ENCODE measurements at regions of chr12 and their contacts with region 1.

Region 1: DNA sequence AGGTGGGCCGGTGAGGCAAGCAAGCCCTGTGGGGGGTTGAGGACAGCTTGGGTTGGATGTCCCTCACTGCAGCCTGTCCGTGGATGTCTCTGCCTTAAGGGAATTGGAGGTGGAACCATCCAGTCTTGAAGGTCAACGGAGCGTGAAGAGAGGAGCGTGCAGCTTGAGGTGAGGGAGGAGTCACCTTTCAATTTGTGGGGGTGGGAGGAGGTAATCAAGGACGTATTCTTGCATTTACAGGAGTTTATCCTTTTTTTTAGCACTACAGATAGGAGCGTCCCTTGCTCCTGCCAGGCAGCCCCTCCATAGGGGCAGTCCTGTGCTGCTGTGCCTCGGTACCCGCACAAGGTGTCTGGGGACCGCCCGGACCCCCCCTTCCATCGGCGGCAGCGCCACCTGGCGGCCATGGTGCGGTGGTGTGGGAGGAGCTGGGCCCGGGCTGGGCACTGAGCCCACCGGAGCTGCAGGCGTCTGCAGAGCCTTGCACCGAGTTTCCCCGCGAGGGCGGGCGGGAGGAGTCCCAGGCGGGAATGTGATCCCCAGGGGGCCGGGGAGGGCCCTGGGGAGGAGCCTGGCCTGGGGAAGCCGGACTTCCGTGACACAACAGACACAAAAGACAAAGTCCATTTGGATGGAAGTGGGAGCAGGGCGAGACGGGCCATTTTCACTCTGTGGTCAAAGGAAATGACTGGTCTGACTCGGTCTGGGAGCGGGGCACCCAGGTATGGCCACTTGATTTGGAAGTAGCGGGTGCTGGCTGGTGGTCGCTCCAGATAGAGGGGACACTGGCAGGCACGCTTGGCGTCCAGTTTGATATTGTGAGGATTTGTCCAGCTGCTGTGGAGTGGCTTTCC is 923 bp downstream of the DNAJC22 start:
- DNase-seq: peak; percentile 93
- ATAC-seq: peak; percentile 79
- H3K4me3 Mint-ChIP-seq: peak overlapping the region; percentile 75
- H3K27ac Mint-ChIP-seq: no peak overlapping the region
- H3K4me1 Mint-ChIP-seq: peaks cover 24% of the 10 kb centered on the region
- H3K27me3 Mint-ChIP-seq: peaks cover 87% of the 10 kb centered on the region
- CTCF ChIP-seq: peak; percentile 97

Region 2: GRCh38 chr12:49043856-49044258 is 303.8 kb before region 1 on chr12:
- CTCF ChIA-PET with region 1: no interaction called
- POLR2A ChIA-PET with region 1: no interaction called
- DNase-seq: peak; percentile 91
- ATAC-seq: peak; percentile 86
- H3K4me3 Mint-ChIP-seq: no peak overlapping the region
- H3K27ac Mint-ChIP-seq: no peak overlapping the region
- H3K4me1 Mint-ChIP-seq: no peaks in the 10 kb centered on the region
- H3K27me3 Mint-ChIP-seq: no peaks in the 10 kb centered on the region
- CTCF ChIP-seq: peak; percentile 76

Region 3: DNA sequence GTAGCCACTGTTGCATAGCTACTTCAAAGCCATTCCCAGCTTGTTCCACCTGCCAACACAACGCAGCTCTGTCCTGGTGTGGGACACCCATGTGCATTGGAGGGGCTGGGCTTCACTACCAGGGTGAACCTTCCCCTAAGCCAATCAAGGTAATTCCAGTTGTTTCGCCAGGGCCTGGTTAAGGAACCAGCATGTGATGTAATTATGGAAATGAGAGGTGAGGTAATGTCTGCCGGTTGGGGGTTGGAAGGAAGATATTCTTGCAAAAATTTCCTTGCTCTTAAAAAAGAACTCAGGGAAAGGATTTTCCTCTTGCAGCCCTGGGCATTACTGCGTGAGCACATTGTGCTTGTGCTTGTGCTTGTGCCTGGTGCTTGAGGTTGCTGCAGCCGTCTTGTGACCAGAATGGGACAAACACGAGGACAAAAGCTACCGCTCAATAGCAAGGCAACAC is 67.9 kb before region 1 on chr12:
- CTCF ChIA-PET with region 1: interaction called, 24 read pairs
- POLR2A ChIA-PET with region 1: no interaction called
- DNase-seq: no peak
- ATAC-seq: peak; percentile 53
- H3K4me3 Mint-ChIP-seq: no peak overlapping the region
- H3K27ac Mint-ChIP-seq: no peak overlapping the region
- H3K4me1 Mint-ChIP-seq: peaks cover 23% of the 10 kb centered on the region
- H3K27me3 Mint-ChIP-seq: no peaks in the 10 kb centered on the region
- CTCF ChIP-seq: no peak

Region 4: DNA sequence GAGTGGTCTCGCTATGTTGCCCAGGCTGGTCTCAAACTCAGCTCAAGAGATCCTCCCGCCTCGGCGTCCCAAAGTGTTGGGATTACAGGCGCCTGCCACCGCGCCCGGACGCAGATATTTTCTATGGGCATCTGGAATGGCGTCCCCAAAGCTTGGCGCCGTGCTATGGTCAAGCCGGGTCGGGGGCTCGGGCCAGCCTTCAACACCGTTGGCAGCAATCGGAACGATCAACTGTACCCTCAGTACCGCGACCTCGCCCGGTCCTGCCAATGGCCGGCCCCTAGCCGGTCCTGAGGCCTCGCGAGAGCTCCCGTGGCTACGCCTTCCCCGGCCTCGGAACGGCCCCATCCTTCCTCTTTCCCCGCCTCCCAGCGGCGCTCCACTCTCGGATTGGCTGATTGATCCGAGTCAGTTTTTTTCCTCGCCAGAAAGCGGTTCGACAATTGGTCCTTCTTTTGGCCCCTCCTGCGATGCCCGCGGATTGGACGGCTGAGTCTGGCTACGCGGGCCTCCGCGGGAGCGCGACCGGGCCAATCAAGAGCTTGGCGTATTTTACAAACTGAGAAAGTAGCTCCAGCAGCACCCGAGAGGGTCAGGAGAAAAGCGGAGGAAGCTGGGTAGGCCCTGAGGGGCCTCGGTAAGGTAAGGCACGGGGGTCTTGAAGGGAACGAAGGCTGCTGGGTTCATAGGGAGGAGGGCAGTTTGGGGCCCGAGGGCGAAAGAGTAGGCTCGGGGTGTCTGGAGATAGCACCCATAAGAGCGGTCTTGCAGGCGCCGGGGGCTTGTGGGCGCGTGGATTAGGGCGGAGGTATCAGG is 24.7 kb before region 1 on chr12 and contains the start of gene TROAP:
- CTCF ChIA-PET with region 1: interaction called, 66 read pairs
- POLR2A ChIA-PET with region 1: interaction called, 9 read pairs
- DNase-seq: peak; percentile 99
- ATAC-seq: peak; percentile 99
- H3K4me3 Mint-ChIP-seq: peak within 1 kb of the TSS; percentile 99
- H3K27ac Mint-ChIP-seq: peak within 1 kb of the TSS; percentile 91
- H3K4me1 Mint-ChIP-seq: peaks cover 15% of the 10 kb centered on the region
- H3K27me3 Mint-ChIP-seq: peaks cover 15% of the 10 kb centered on the region
- CTCF ChIP-seq: no peak
- total RNA-seq, gene TROAP: 78.5 to 89.2 TPM (median 80.0 TPM) in 3 replicates

Region 5: DNA sequence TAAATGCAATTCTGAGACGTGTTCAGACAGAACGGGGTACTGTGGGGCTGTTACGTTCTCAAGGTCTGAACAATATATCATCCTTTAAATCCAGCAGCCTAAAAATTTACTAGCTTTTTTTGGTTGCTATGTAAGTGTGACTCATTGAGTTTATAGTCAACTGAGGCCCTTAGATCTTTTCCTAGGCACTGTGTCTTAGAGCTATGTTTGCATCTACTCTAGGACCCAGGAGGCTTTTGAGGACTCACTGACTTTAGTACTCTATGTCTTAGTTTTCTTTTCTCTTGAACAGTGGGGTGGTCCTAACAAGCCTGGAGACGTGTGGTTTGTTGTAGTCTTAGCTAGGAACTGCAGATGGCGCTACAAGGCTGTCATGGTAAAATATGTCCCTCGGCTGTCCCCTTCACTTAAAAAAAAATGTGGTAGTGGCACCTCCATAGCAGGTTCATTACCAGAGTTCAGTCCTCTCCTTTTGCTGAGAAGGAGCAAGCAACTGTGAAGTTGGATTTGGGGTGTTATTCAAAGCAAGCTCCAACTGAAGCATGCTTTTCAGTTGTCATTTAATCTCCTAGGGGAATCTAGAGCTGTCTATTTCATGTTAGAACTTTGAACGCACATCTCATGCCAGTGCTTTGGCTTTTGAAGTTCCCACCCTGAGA is 11.0 kb after region 1 on chr12:
- CTCF ChIA-PET with region 1: interaction called, 101 read pairs
- POLR2A ChIA-PET with region 1: no interaction called
- DNase-seq: peak; percentile 67
- ATAC-seq: peak; percentile 99
- H3K4me3 Mint-ChIP-seq: no peak overlapping the region
- H3K27ac Mint-ChIP-seq: no peak overlapping the region
- H3K4me1 Mint-ChIP-seq: no peaks in the 10 kb centered on the region
- H3K27me3 Mint-ChIP-seq: peaks cover 3% of the 10 kb centered on the region; the same call in 1 of the 2 replicates
- CTCF ChIP-seq: peak; percentile 65

Region 6: DNA sequence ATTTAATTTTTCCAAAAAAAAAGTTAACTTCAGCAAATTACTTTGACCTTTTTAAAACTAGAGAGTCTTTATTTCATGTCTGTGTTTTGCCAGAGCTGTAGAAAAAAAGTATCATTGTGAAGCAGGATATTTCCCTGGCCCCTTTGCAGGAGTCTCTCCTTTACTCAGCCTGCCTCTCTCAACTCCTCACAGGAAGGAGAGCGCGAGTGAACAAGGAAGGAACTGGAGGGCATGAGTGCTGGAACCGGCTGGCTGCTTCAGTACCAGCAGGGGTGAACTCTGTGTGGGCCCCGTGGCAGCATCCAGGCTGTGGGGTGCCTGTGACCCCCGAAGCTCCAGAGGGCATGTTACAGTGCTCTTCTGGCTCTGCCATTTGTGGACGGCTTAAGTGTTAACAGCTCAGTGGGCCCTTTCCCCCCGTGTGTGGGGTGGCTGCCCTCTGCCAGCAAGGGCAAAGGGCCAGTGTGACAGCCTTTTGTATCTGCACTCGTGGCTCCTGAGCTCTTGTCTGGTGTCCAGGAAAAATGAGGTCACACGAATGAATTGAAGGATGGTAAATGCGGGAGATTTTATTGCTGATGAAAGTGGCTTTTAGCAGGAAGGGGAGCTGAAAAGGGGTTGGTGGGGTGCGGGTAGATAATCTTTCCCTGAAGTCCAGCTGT is 114.6 kb after region 1 on chr12:
- CTCF ChIA-PET with region 1: interaction called, 10 read pairs
- POLR2A ChIA-PET with region 1: no interaction called
- DNase-seq: no peak
- ATAC-seq: peak; percentile 39; the same call in 1 of the 2 replicates
- H3K4me3 Mint-ChIP-seq: no peak overlapping the region
- H3K27ac Mint-ChIP-seq: peak overlapping the region; percentile 8; the same call in 1 of the 2 replicates
- H3K4me1 Mint-ChIP-seq: peaks cover 13% of the 10 kb centered on the region
- H3K27me3 Mint-ChIP-seq: no peaks in the 10 kb centered on the region
- CTCF ChIP-seq: no peak

Region 7: GRCh38 chr12:49515266-49515665 is 167.7 kb after region 1 on chr12:
- CTCF ChIA-PET with region 1: interaction called, 51 read pairs
- POLR2A ChIA-PET with region 1: interaction called, 3 read pairs
- DNase-seq: no peak
- ATAC-seq: no peak
- H3K4me3 Mint-ChIP-seq: no peak overlapping the region
- H3K27ac Mint-ChIP-seq: no peak overlapping the region; the same call in 1 of the 2 replicates
- H3K4me1 Mint-ChIP-seq: no peaks in the 10 kb centered on the region
- H3K27me3 Mint-ChIP-seq: no peaks in the 10 kb centered on the region
- CTCF ChIP-seq: no peak

Region 8: DNA sequence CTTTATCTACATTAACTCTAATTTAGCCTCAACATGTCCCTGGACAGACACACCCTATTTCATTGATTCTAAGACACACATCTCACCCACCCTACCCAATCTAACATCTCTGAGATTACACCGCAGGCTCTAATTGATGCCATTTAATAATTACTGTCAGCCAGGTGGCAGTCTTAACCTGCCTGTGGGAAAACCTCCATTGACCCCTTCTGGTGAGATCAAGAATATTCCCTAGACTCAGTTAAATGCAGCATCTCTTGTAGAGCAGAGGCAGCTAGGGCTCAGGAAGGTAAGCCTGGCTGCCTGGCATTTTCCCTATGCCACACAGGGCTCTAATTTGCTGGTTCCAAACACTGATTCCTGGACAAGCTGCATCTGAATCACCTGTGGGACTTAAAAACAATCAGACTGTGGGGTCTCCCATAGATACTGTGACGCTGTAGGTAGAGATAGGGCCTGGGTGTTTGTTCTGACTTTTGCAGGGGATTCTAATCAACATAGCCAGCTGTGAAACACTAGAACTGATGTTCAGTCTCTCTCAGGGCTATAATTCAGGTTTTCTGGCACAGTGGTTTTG is 206.0 kb after region 1 on chr12:
- CTCF ChIA-PET with region 1: interaction called, 39 read pairs
- POLR2A ChIA-PET with region 1: no interaction called
- DNase-seq: no peak
- ATAC-seq: peak; percentile 62
- H3K4me3 Mint-ChIP-seq: no peak overlapping the region
- H3K27ac Mint-ChIP-seq: no peak overlapping the region
- H3K4me1 Mint-ChIP-seq: peaks cover 3% of the 10 kb centered on the region; the same call in 1 of the 2 replicates
- H3K27me3 Mint-ChIP-seq: peaks cover 33% of the 10 kb centered on the region
- CTCF ChIP-seq: no peak

Measured in WTC11 (cell line).